Activated T-helper 2 cell treated with anti-CD3 and anti-CD28 coated beads, Interferon-gamma antibody, Interleukin-2, Interleukin-4, amounts not matched to agents 10 μg/mL and 5 μg/mL and 100 μg/mL, durations not matched to agents 14 hours and 24 hours and 36 hours (primary cell): ENCODE measurements at regions of chr6 and their contacts with region 1.

Region 1: DNA sequence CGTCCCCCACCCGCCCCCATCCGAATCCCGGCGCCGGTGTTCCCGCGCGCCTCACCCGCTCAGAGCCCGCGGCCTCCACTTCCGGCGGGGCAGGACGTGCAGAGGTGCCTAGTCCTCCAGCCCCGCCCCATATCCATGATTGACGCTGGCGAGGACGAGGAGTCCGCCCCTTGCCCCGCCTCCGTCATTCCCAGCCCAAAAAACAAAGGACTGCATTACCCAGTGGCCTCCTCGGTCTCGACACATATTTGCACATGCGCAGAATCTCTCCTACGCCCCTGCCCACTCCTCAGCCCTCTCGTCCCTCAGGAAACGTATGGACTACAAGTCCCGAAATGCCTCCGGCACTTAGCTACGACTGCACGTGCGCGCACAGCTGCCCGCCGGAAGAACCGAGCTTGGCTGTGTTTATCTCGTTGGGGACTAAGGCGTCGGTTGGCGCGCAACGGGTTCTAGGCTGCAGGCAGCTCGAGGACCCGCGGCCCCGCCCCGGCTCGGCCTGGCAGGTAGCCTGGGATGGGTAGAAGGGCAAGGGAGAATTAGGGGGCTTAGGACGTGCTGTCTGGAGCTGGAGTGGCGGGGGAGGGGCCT is at the starts of genes KLHDC3 and MEA1:
- DNase-seq: peak; percentile 99
- H3K4me3 Mint-ChIP-seq: peak within 1 kb of the TSS; percentile 96
- H3K27ac Mint-ChIP-seq: peak within 1 kb of the TSS; percentile 74
- H3K4me1 Mint-ChIP-seq: peaks cover 35% of the 10 kb centered on the region
- H3K27me3 Mint-ChIP-seq: no peaks in the 10 kb centered on the region
- total RNA-seq, gene KLHDC3: 71.2 and 74.6 TPM in 2 replicates
- total RNA-seq, gene MEA1: 90.9 and 91.2 TPM in 2 replicates

Region 2: GRCh38 chr6:42978839-42979522 is 35.0 kb before region 1 on chr6 and contains the start of gene PEX6:
- intact Hi-C with region 1: loop called (anchors 1 kb)
- DNase-seq: peak; percentile 96
- H3K4me3 Mint-ChIP-seq: peak within 1 kb of the TSS; percentile 91
- H3K27ac Mint-ChIP-seq: peak within 1 kb of the TSS; percentile 99
- H3K4me1 Mint-ChIP-seq: peaks cover 31% of the 10 kb centered on the region
- H3K27me3 Mint-ChIP-seq: no peaks in the 10 kb centered on the region
- total RNA-seq, gene PEX6: 26.0 and 27.8 TPM in 2 replicates

Region 3: DNA sequence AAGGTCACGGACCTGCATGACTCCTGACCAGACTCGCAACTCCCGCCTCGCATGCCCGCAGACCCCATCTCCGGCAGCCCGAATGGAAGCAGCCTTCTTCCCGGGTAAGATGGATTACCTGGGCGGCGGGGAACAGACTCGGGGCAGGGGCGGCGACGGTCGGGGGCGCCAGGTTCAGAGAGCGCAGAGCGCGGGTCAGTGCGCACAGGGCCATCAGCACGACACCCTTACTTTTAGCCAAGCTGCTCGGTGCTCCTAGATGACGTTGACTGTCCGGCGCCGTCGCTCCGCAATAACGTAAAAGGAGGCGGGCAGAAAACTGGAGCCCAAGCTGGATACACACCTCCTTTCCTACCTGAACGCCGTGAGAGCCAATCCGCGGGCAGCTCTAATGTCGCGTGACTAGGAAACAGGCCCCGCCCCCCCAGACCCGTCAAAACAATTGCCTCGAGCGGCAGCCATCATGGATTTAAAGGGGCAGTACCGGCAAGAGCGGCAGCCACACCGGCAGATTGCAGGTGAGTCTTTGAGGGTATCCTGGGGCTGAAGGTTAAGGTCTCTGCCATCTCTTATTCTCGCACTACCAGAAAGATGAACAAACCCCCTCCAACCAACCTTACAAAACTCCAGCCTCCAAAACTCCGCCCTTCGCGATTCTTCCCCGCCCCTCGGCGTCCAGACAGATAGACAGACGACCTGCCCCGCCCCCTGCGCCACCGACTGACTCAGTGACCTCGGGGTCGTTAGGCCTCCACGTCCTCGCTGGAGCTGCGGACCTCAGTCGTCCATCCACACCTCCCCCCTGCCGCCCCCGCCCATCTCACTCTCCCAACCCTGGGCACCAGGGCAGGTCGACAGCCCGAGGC is 45.5 kb after region 1 on chr6 and contains the starts of genes KLC4 and MRPL2:
- intact Hi-C with region 1: loop called (anchors 1 kb)
- DNase-seq: peak; percentile 96
- H3K4me3 Mint-ChIP-seq: peak within 1 kb of the TSS; percentile 93
- H3K27ac Mint-ChIP-seq: peak within 1 kb of the TSS; percentile 98
- H3K4me1 Mint-ChIP-seq: peaks cover 28% of the 10 kb centered on the region
- H3K27me3 Mint-ChIP-seq: no peaks in the 10 kb centered on the region
- total RNA-seq, gene KLC4: 11.7 and 14.1 TPM in 2 replicates
- total RNA-seq, gene MRPL2: 76.0 and 76.6 TPM in 2 replicates

Region 4: DNA sequence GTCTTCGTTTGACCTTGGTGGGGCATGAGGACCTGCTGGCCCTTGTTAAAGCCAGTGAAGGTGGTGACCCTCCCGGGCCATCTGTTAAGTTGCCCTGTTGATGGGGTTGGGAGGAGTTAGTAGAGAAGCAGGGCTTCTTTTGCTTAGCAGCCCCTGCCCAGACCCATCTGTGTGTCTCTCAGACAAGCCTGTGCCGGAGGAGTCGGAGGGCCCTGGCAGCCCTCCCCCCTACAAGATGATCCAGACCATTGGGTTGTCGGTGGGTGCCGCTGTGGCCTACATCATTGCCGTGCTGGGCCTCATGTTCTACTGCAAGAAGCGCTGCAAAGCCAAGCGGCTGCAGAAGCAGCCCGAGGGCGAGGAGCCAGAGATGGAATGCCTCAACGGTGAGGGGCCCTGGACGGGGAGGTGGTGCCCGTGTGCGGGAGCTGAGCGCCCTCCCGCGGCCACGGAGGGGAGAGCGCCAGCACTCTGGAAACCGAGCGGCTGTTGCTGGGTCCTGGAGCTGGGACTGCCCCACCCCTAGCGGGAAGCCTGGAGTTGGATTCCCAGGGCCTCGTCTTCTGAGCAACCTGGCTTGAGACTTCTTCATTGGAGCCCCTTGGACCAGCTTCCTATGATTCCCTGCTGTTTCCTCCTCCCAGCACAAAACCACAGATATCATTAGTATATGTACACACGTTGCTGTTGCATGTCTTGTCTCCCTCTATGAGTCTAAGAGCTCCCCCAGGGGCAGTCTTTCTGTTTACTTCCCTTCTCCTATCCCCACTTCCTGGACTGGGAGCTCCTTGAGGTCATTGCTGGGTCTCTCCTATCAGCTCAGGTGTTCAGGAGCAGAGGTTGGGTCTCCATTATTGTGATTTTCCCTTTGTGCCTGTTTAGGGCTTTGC is 129.5 kb after region 1 on chr6:
- intact Hi-C with region 1: loop called (anchors 1 kb)
- DNase-seq: peak; percentile 70
- H3K4me3 Mint-ChIP-seq: no peak overlapping the region
- H3K27ac Mint-ChIP-seq: peak overlapping the region; percentile 25
- H3K4me1 Mint-ChIP-seq: peaks cover 8% of the 10 kb centered on the region
- H3K27me3 Mint-ChIP-seq: no peaks in the 10 kb centered on the region